B cell (primary cell): ENCODE measurements at regions of chr17 and their contacts with region 1.

Region 1: GRCh38 chr17:81484195-81484979 is 28.2 kb downstream of the ACTG1 start:
- DNase-seq: peak; percentile 93
- ATAC-seq: peak; percentile 65
- H3K4me3 ChIP-seq: peak overlapping the region in 4 of 5 experiments; percentile 21 to 66 (median 48)
- H3K4me3 Mint-ChIP-seq: peak overlapping the region; percentile 57
- H3K27ac ChIP-seq: no peak overlapping the region
- H3K27ac Mint-ChIP-seq: no peak overlapping the region
- H3K4me1 ChIP-seq: peaks cover 46 to 53% of the 10 kb centered on the region in 2 donors
- H3K4me1 Mint-ChIP-seq: peaks cover 26% of the 10 kb centered on the region
- H3K27me3 ChIP-seq: peaks cover 0 to 28% (median 12%) of the 10 kb centered on the region in 4 experiments
- H3K27me3 Mint-ChIP-seq: peaks cover 13% of the 10 kb centered on the region
- CTCF ChIP-seq: peak; percentile 99

Region 2: DNA sequence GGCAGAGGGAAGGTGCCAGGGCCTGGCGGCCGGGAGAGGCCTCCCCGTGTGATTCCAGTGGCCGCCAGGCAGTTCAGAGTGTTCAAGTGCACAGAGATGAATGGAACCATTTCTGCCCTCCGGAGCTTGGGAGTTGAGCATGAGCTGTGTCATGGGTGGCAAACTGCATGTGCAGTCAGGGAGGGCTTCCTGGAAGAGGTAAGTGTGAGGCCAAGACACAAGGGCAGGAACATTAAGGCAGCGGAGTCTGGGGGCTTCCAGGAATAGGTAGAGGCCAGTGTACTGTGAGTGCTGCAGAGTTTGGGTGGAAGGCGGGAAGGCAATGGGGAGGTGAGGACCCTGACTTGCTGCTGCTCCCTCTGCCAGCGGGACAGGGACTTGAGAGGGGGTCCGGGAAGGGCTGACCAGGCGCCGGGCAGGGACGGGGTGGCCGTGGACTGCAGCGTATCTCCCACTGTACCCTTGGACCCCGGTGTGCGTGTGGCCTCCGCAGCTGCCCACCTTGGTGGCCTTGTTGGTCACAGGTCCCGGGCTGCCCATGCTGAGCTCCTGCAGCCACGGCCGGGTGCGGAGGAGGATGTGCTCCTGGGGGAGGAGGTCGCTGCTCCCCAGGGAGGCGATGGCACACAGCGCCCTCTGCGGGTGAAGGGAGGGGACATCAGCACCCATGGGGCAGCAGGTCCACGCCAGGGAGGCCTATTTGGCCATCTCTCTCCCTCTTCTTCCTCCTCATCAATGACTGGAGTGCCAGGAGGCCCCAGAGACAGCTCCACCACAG is 254.2 kb before region 1 on chr17:
- CTCF ChIA-PET with region 1: no interaction called
- POLR2A ChIA-PET with region 1: no interaction called
- intact Hi-C with region 1: loop called (anchors 1 kb)
- DNase-seq: peak; percentile 21
- ATAC-seq: no peak
- H3K4me3 ChIP-seq: no peak overlapping the region
- H3K4me3 Mint-ChIP-seq: no peak overlapping the region
- H3K27ac ChIP-seq: no peak overlapping the region
- H3K27ac Mint-ChIP-seq: peak overlapping the region; percentile 56
- H3K4me1 ChIP-seq: peaks cover 19 to 26% of the 10 kb centered on the region in 2 donors
- H3K4me1 Mint-ChIP-seq: peaks cover 39% of the 10 kb centered on the region
- H3K27me3 ChIP-seq: no peaks in the 10 kb centered on the region
- H3K27me3 Mint-ChIP-seq: no peaks in the 10 kb centered on the region
- CTCF ChIP-seq: peak; percentile 30

Region 3: DNA sequence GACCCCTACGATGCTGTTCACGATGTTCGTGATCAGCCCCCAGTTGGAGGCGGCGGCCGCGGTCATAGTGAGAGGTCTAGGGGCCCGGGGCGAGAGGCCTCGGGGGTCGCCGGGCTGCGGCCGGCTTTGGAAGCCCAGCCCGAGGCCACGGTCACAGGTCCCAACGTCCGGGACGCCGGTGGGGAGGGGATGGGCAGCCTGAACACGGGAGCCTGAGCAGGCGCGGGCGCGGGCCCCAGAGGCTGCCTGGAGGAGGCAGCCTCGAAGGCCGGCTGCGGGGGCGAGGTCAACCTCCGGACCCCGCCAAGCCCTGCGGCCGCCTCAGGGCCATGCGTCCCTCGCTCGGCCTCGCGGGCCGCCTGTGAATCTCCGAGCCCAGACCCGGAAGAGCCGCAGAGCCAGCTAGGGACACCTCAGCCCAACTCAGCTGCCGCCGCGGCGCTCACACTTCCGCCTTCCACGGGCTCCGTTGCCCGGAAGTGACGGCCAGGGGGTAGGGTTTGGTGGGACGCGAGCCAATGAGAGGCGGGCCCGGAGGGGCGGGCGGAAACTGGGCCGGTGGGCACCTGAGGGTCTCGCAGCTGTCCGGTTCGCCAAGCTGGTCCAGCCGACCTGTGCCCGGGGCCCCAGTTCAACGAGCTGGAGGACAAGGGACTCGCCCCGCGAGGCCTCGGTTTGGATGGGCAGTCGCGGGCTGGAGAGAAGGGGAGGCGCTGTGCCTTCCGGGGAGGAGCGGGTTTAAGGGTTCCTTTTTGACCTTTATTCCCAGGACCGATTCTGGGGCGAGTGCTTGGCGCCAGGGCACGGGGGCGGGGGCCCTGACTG is 189.3 kb before region 1 on chr17 and contains the start of gene SLC38A10:
- CTCF ChIA-PET with region 1: interaction called, 58 read pairs
- POLR2A ChIA-PET with region 1: interaction called, 3 read pairs
- intact Hi-C with region 1: loop called (anchors 1 kb)
- DNase-seq: peak; percentile 92
- ATAC-seq: peak; percentile 86
- H3K4me3 ChIP-seq: peak within 1 kb of the TSS; percentile 66 to 97 (median 91)
- H3K4me3 Mint-ChIP-seq: peak within 1 kb of the TSS; percentile 97
- H3K27ac ChIP-seq: peak within 1 kb of the TSS; percentile 75 to 94
- H3K27ac Mint-ChIP-seq: peak within 1 kb of the TSS; percentile 97
- H3K4me1 ChIP-seq: peaks cover 19 to 28% of the 10 kb centered on the region in 2 donors
- H3K4me1 Mint-ChIP-seq: peaks cover 43% of the 10 kb centered on the region
- H3K27me3 ChIP-seq: no peaks in the 10 kb centered on the region
- H3K27me3 Mint-ChIP-seq: no peaks in the 10 kb centered on the region
- CTCF ChIP-seq: no peak
- total RNA-seq, gene SLC38A10: 104 and 116 TPM in 2 replicates

Region 4: DNA sequence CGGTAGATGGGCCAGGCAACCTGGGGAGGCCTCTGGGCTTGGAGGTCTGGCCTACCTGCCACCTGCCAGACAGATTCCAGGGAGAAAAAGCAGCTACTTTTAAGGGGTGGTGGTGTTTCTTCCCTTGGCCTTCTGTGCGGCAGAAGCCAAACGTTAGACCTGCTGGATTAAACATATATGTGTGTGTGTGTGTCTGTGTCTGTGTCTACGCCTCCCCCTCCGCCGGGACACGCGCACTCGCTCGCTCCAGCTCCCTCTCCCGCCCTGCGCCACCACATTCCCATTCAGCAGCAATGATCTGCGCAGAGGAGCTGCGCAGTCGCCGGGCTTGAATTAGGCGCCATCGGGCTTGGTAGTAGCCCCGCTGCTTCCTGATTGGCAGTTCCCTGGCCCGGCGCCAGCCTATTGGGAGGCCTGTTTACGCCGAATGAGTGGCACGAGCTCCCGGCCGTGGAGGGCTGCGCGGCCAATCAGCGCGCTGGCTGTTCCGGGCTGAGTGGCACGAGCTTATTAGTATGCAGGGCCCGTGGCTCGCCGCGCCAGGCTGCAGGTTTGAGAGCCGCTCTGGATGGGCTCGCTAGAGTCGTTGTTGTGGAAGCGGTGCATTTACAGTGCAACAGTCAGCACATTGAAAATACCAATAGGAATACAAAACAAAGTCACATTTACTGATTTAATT is 89.3 kb before region 1 on chr17 and contains the start of gene BAHCC1:
- CTCF ChIA-PET with region 1: interaction called, 12 read pairs
- POLR2A ChIA-PET with region 1: interaction called, 3 read pairs
- intact Hi-C with region 1: loop called (anchors 2 kb)
- DNase-seq: peak; percentile 85
- ATAC-seq: peak; percentile 79
- H3K4me3 ChIP-seq: peak within 1 kb of the TSS in 4 of 5 experiments; percentile 17 to 57 (median 36)
- H3K4me3 Mint-ChIP-seq: peak within 1 kb of the TSS; percentile 76
- H3K27ac ChIP-seq: no peak within 1 kb of the TSS
- H3K27ac Mint-ChIP-seq: peak within 1 kb of the TSS; percentile 78
- H3K4me1 ChIP-seq: peaks cover 58 to 66% of the 10 kb centered on the region in 2 donors
- H3K4me1 Mint-ChIP-seq: peaks cover 29% of the 10 kb centered on the region
- H3K27me3 ChIP-seq: peaks cover 0 to 84% (median 55%) of the 10 kb centered on the region in 4 experiments
- H3K27me3 Mint-ChIP-seq: peaks cover 44% of the 10 kb centered on the region
- CTCF ChIP-seq: no peak
- total RNA-seq, gene BAHCC1: 0.12 and 0.44 TPM in 2 replicates

Region 5: DNA sequence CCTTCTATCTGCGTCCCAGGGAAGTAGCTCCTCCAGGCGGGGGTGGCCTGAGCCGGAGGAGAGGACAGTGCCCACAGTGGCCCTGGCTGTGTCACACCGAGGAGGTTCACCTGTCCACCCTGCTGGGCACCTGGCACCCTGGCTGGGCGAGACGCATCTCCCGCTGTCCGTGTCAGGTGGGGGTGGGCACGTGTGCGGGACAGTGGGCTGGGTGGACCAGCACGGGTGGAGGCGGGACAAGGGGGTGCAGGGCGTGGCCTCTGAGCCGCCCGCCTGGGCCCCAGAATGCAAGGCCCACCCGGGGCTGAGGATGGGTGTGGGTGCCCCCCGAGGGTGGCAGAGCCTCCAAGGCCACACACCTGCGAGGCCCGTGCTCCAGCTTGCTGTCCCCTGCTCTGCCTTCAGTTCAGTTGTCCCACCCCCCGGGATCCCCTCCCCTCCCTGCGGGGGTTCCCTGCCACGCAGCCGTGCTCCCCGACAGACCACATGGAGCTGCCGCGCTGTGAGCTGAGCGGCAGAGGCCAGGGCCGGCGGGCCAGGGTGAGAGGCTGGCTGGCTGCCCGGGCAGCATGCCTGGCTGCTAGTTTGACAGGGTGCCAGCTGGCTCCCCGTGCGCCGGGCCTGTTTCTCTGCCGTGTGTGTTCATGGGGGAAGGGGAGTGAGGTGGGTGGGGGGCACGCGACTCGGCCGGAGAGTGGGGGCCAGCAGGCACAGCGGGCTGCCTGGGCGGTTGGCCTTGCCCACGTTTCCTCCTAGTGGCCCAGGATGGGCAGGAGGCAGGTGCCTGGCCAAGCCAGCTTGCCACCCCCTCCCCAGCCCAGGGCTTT is 55.2 kb before region 1 on chr17:
- CTCF ChIA-PET with region 1: no interaction called
- POLR2A ChIA-PET with region 1: no interaction called
- intact Hi-C with region 1: no loop called
- DNase-seq: peak; percentile 52
- ATAC-seq: no peak
- H3K4me3 ChIP-seq: no peak overlapping the region
- H3K4me3 Mint-ChIP-seq: no peak overlapping the region
- H3K27ac ChIP-seq: no peak overlapping the region
- H3K27ac Mint-ChIP-seq: no peak overlapping the region
- H3K4me1 ChIP-seq: peaks cover 39% of the 10 kb centered on the region in 2 donors
- H3K4me1 Mint-ChIP-seq: peaks cover 18% of the 10 kb centered on the region
- H3K27me3 ChIP-seq: peaks cover 0 to 56% (median 15%) of the 10 kb centered on the region in 4 experiments
- H3K27me3 Mint-ChIP-seq: peaks cover 9% of the 10 kb centered on the region
- CTCF ChIP-seq: no peak

Region 6: DNA sequence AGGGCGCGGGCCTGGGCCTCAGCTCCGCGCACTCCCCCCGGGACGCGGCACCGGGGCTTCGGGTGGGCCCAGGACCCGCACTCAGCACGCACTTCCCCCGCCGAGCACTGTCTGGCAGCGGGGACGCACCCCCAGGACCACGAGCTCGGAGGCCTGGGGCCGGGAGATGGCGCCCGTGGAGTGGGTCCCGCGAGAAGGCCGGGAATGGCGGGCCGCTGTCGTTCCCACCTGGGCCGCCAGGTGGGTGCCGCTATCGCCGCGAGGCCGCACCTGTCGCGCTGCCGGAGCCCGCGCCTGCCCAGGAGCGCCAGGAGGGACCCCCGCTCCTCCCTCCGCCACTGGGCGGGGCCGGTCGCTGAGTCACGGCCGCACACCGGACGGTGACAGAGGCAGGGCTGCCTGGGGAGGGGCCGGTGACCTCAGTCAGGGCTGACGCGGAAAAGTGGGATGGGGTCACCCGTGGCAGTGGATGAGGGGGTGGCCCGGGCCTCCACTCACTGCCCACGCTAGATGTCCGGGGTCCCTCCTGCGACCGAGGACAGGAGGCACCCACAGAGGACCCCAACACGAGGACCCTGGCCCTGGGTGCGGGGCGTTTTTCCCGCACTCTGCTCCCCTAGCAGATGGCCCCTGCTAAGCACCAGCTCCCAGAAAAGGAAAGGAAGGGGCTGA is 35.0 kb after region 1 on chr17:
- CTCF ChIA-PET with region 1: interaction called, 10 read pairs
- POLR2A ChIA-PET with region 1: interaction called, 8 read pairs
- intact Hi-C with region 1: no loop called
- DNase-seq: peak; percentile 88
- ATAC-seq: peak; percentile 14
- H3K4me3 ChIP-seq: peak overlapping the region in 4 of 5 experiments; percentile 47 to 94 (median 64)
- H3K4me3 Mint-ChIP-seq: peak overlapping the region; percentile 98
- H3K27ac ChIP-seq: peak overlapping the region; percentile 97 to 98
- H3K27ac Mint-ChIP-seq: peak overlapping the region; percentile 86
- H3K4me1 ChIP-seq: peaks cover 37 to 55% of the 10 kb centered on the region in 2 donors
- H3K4me1 Mint-ChIP-seq: peaks cover 42% of the 10 kb centered on the region
- H3K27me3 ChIP-seq: no peaks in the 10 kb centered on the region
- H3K27me3 Mint-ChIP-seq: no peaks in the 10 kb centered on the region
- CTCF ChIP-seq: peak; percentile 87

Region 7: GRCh38 chr17:81583589-81584342 is 99.4 kb after region 1 on chr17:
- CTCF ChIA-PET with region 1: no interaction called
- POLR2A ChIA-PET with region 1: no interaction called
- intact Hi-C with region 1: no loop called
- DNase-seq: no peak
- ATAC-seq: no peak
- H3K4me3 ChIP-seq: no peak overlapping the region
- H3K4me3 Mint-ChIP-seq: no peak overlapping the region
- H3K27ac ChIP-seq: no peak overlapping the region
- H3K27ac Mint-ChIP-seq: no peak overlapping the region
- H3K4me1 ChIP-seq: peaks cover 0 to 3% of the 10 kb centered on the region in 2 donors
- H3K4me1 Mint-ChIP-seq: peaks cover 9% of the 10 kb centered on the region
- H3K27me3 ChIP-seq: no peaks in the 10 kb centered on the region
- H3K27me3 Mint-ChIP-seq: no peaks in the 10 kb centered on the region
- CTCF ChIP-seq: no peak

Region 8: DNA sequence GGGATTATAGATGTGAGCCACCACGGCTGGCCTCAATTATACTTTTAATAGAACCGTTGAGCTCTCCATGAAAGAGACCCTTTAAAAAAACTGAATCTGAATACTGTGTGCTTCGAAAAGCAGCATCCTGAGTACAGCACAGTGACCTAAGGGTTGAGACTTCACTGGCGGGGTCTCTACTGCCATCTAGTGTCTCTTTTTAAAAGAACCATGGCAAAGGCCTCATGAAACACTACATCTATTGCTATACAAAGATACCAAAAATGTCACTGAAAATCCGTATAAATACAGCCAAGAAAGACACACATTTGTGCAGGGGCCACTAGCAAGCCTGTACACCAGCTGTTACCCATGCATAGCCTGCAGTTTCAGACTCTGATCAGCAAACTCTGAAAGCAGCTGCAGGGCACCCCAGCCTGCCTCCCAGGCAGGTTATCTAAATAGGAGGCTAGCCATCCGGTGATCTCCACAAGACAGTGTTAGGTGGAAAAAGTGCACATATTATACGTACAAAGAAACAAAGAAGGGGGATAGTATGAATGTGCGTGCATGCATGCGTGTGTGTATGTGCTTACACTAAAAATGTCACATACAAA is 117.2 kb after region 1 on chr17:
- CTCF ChIA-PET with region 1: interaction called, 16 read pairs
- POLR2A ChIA-PET with region 1: no interaction called
- intact Hi-C with region 1: loop called (anchors 10 kb)
- DNase-seq: peak; percentile 81
- ATAC-seq: peak; percentile 52
- H3K4me3 ChIP-seq: no peak overlapping the region
- H3K4me3 Mint-ChIP-seq: peak overlapping the region; percentile 14
- H3K27ac ChIP-seq: no peak overlapping the region
- H3K27ac Mint-ChIP-seq: peak overlapping the region; percentile 43
- H3K4me1 ChIP-seq: peaks cover 22 to 43% of the 10 kb centered on the region in 2 donors
- H3K4me1 Mint-ChIP-seq: peaks cover 38% of the 10 kb centered on the region
- H3K27me3 ChIP-seq: no peaks in the 10 kb centered on the region
- H3K27me3 Mint-ChIP-seq: no peaks in the 10 kb centered on the region
- CTCF ChIP-seq: peak; percentile 95